ENCODE measurements at regions of chrX and their contacts with region 1.

Region 1: DNA sequence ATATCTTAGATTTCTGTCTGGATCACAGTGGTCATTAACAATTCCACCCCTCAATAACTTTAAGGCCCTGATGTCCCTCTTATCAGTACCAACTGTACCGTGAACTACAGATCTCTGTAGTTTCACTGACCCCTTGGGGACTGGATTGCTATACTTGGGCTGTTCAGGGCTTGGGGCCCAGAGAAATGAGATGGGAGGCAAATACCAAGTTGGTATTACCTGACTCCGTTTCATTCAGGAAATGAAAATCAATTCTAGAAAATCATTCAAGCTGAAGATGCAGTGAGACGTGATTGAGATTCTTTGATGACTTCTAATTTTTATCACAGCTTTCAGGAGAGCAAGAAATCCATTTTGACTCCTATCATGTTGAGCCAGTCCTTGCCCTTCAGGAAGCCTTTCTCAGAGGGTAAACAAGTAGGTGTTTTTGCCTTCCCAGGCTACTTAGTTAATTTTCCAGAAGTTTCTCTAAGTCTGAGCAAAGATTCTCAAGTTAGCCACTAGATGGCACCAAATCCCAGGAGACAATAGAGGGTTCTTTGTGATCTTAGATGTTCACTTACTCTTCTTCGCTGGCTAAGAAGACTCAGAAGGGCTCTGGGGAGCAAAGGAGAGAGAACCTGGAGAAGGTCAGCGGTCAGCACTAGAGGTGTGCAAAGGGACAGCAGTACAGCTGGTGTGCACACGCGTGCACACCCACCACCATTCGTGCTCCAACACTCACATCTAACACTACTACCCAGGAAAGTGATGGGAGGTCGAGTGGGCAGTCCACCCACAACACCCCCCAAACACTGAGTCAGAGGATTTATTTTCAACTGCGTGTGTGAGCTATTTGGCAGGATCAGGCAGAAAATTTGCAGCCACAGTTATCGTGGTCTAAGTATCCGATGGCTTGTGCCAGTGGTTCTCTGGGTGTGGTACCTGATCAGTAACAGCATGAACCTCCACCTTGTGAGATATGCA is 7.4 kb downstream of the HNRNPH2 start:
- DNase-seq: peak; percentile 78
- ATAC-seq: peak; percentile 58
- H3K4me3 ChIP-seq: no peak overlapping the region
- H3K4me3 Mint-ChIP-seq: peak overlapping the region; percentile 59
- H3K27ac ChIP-seq: peak overlapping the region; percentile 59 to 71
- H3K27ac Mint-ChIP-seq: peak overlapping the region; percentile 84
- H3K4me1 ChIP-seq: peaks cover 33 to 38% of the 10 kb centered on the region in 2 donors
- H3K4me1 Mint-ChIP-seq: peaks cover 55% of the 10 kb centered on the region
- H3K27me3 ChIP-seq: no peaks in the 10 kb centered on the region
- H3K27me3 Mint-ChIP-seq: no peaks in the 10 kb centered on the region
- CTCF ChIP-seq: peak; percentile 72

Region 2: GRCh38 chrX:101287402-101287801 is 128.1 kb before region 1 on chrX:
- CTCF ChIA-PET with region 1: no interaction called
- POLR2A ChIA-PET with region 1: no interaction called
- intact Hi-C with region 1: loop called (anchors 5 kb)
- DNase-seq: peak; percentile 51
- ATAC-seq: peak; percentile 47
- H3K4me3 ChIP-seq: no peak overlapping the region
- H3K4me3 Mint-ChIP-seq: no peak overlapping the region
- H3K27ac ChIP-seq: no peak overlapping the region
- H3K27ac Mint-ChIP-seq: no peak overlapping the region
- H3K4me1 ChIP-seq: no peaks in the 10 kb centered on the region
- H3K4me1 Mint-ChIP-seq: no peaks in the 10 kb centered on the region
- H3K27me3 ChIP-seq: peaks cover 0 to 3% (median 0%) of the 10 kb centered on the region in 4 experiments
- H3K27me3 Mint-ChIP-seq: peaks cover 2% of the 10 kb centered on the region
- CTCF ChIP-seq: peak; percentile 64

Region 3: DNA sequence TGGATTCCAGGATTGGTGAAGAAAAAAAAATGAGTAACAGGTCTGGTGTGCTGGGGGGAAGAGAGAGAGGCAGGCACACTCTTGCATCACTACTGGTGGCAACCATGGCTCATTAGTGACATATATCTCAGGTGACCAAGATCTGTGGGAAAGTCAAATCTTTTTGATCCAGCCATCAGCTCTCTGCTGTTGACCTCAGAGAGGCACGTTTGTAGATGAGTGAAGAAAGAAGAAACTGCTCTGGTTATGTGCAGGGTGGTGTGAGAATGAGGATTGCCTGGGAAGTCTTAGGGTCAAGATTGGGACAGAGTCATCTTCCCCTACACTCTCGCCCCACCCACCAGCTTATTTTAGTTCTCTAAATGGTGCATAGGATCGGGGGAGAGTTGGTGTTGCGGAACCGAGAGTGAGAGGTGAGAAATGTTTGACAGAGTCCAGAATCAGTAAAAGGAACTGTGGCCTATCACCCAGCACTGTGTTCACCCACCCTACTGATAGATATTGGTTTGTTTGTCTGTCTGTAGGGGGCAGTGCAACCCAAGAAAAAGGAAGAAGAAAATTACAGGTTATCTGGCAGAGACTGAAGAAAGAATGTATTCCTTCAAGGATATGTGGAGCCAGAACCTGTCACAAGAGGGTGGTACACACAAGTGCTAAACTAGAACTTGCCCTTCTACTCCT is 180.4 kb after region 1 on chrX:
- CTCF ChIA-PET with region 1: interaction called, 4 read pairs
- POLR2A ChIA-PET with region 1: no interaction called
- intact Hi-C with region 1: loop called (anchors 5 kb)
- DNase-seq: peak; percentile 73
- ATAC-seq: peak; percentile 80
- H3K4me3 ChIP-seq: no peak overlapping the region
- H3K4me3 Mint-ChIP-seq: no peak overlapping the region
- H3K27ac ChIP-seq: no peak overlapping the region
- H3K27ac Mint-ChIP-seq: peak overlapping the region; percentile 46
- H3K4me1 ChIP-seq: no peaks in the 10 kb centered on the region
- H3K4me1 Mint-ChIP-seq: peaks cover 4% of the 10 kb centered on the region
- H3K27me3 ChIP-seq: peaks cover 0 to 4% (median 2%) of the 10 kb centered on the region in 4 experiments
- H3K27me3 Mint-ChIP-seq: peaks cover 11% of the 10 kb centered on the region
- CTCF ChIP-seq: peak; percentile 71

Region 4: GRCh38 chrX:101759000-101759399 is 343.5 kb after region 1 on chrX:
- CTCF ChIA-PET with region 1: interaction called, 17 read pairs
- POLR2A ChIA-PET with region 1: no interaction called
- intact Hi-C with region 1: loop called (anchors 1 kb)
- DNase-seq: peak; percentile 52
- ATAC-seq: peak; percentile 61
- H3K4me3 ChIP-seq: no peak overlapping the region
- H3K4me3 Mint-ChIP-seq: no peak overlapping the region
- H3K27ac ChIP-seq: no peak overlapping the region
- H3K27ac Mint-ChIP-seq: no peak overlapping the region
- H3K4me1 ChIP-seq: no peaks in the 10 kb centered on the region
- H3K4me1 Mint-ChIP-seq: no peaks in the 10 kb centered on the region
- H3K27me3 ChIP-seq: peaks cover 0 to 4% (median 0%) of the 10 kb centered on the region in 4 experiments
- H3K27me3 Mint-ChIP-seq: peaks cover 7% of the 10 kb centered on the region
- CTCF ChIP-seq: peak; percentile 70

Region 5: GRCh38 chrX:101799387-101799786 is 383.9 kb after region 1 on chrX:
- CTCF ChIA-PET with region 1: interaction called, 5 read pairs
- POLR2A ChIA-PET with region 1: no interaction called
- intact Hi-C with region 1: loop called (anchors 1 kb)
- DNase-seq: peak; percentile 81
- ATAC-seq: peak; percentile 98
- H3K4me3 ChIP-seq: no peak overlapping the region
- H3K4me3 Mint-ChIP-seq: peak overlapping the region; percentile 44
- H3K27ac ChIP-seq: no peak overlapping the region
- H3K27ac Mint-ChIP-seq: no peak overlapping the region
- H3K4me1 ChIP-seq: no peaks in the 10 kb centered on the region
- H3K4me1 Mint-ChIP-seq: peaks cover 3% of the 10 kb centered on the region
- H3K27me3 ChIP-seq: no peaks in the 10 kb centered on the region
- H3K27me3 Mint-ChIP-seq: no peaks in the 10 kb centered on the region
- CTCF ChIP-seq: peak; percentile 71

Region 6: GRCh38 chrX:101931488-101932248 is 516.2 kb after region 1 on chrX and contains the start of gene ZMAT1:
- CTCF ChIA-PET with region 1: interaction called, 4 read pairs
- POLR2A ChIA-PET with region 1: interaction called, 15 read pairs
- intact Hi-C with region 1: no loop called
- DNase-seq: peak; percentile 95
- ATAC-seq: peak; percentile 84
- H3K4me3 ChIP-seq: peak within 1 kb of the TSS; percentile 41 to 68 (median 61)
- H3K4me3 Mint-ChIP-seq: peak within 1 kb of the TSS; percentile 83
- H3K27ac ChIP-seq: peak within 1 kb of the TSS; percentile 94 to 97
- H3K27ac Mint-ChIP-seq: peak within 1 kb of the TSS; percentile 95
- H3K4me1 ChIP-seq: peaks cover 6 to 12% of the 10 kb centered on the region in 2 donors
- H3K4me1 Mint-ChIP-seq: peaks cover 17% of the 10 kb centered on the region
- H3K27me3 ChIP-seq: peaks cover 0 to 2% (median 0%) of the 10 kb centered on the region in 4 experiments
- H3K27me3 Mint-ChIP-seq: no peaks in the 10 kb centered on the region
- CTCF ChIP-seq: no peak
- total RNA-seq, gene ZMAT1: 38.4 and 43.6 TPM in 2 replicates

Region 7: DNA sequence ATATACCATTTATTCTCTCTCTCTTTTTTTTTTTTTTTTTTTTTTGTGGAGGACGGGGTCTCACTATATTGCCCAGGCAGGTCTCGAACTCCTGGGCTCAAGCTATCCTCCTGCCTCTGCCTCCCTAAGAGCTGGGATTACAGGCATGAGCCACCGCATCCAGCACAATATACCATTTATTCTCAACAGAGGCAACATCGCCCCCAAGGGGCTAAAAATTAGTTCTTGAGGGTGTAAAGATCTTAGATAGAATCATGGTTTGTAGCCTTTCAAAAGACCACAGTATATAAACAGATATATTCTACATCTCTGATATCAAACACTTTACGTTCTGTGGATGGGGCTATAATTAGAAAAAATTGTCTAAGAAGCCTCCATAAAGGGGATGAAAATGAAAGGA is 670.2 kb after region 1 on chrX:
- CTCF ChIA-PET with region 1: interaction called, 3 read pairs
- POLR2A ChIA-PET with region 1: no interaction called
- intact Hi-C with region 1: loop called (anchors 10 kb)
- DNase-seq: peak; percentile 1
- ATAC-seq: no peak
- H3K4me3 ChIP-seq: no peak overlapping the region
- H3K4me3 Mint-ChIP-seq: no peak overlapping the region
- H3K27ac ChIP-seq: no peak overlapping the region
- H3K27ac Mint-ChIP-seq: no peak overlapping the region
- H3K4me1 ChIP-seq: no peaks in the 10 kb centered on the region
- H3K4me1 Mint-ChIP-seq: no peaks in the 10 kb centered on the region
- H3K27me3 ChIP-seq: no peaks in the 10 kb centered on the region
- H3K27me3 Mint-ChIP-seq: no peaks in the 10 kb centered on the region
- CTCF ChIP-seq: no peak